ENCODE measurements at regions of chr9 and their contacts with region 1.

Region 1: GRCh38 chr9:135971892-135972291 is 10.7 kb upstream of the UBAC1 start:
- DNase-seq: peak in 1 of 2 experiments; percentile 38
- ATAC-seq: peak; percentile 26 to 30; a peak in 4 of 6 replicates
- H3K4me3 ChIP-seq: no peak overlapping the region
- H3K27ac ChIP-seq: no peak overlapping the region
- H3K4me1 ChIP-seq: peaks cover 9% of the 10 kb centered on the region; the same call in 1 of the 3 replicates
- CTCF ChIP-seq: no peak
- EP300 ChIP-seq: no peak
- POLR2A ChIP-seq: no peak
- RAD21 ChIP-seq: no peak

Region 2: GRCh38 chr9:135819905-135820304 is 152.0 kb before region 1 on chr9:
- CTCF ChIA-PET with region 1: no interaction called
- POLR2A ChIA-PET with region 1: no interaction called
- DNase-seq: no peak
- ATAC-seq: no peak
- H3K4me3 ChIP-seq: no peak overlapping the region
- H3K27ac ChIP-seq: no peak overlapping the region
- H3K4me1 ChIP-seq: no peaks in the 10 kb centered on the region
- CTCF ChIP-seq: no peak
- EP300 ChIP-seq: no peak
- POLR2A ChIP-seq: no peak
- RAD21 ChIP-seq: no peak

Region 3: DNA sequence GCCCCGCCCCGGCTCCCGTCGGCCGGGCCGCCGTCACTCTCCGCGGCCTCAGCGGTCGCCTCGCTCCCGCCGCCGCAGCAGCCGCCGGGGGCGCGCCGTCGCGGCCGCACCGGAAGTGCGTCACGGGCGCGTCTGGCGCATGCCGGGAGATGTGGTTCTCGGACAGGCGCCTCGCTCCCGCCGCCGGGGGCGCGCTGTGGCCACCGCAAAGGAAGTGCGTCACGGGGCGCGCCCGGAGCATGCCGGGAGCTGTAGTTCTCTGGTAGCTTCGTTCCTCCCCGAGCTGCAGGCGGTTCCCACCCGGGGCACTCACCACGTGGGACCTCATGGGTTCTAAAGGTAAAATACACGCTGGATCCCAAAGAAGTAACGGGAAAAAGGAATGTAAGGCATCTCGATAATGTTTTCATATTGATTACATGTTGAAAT is 10.6 kb before region 1 on chr9 and contains the start of gene UBAC1:
- CTCF ChIA-PET with region 1: interaction called, 27 read pairs
- POLR2A ChIA-PET with region 1: no interaction called
- DNase-seq: peak; percentile 95 to 99
- ATAC-seq: peak; percentile 92 to 93
- H3K4me3 ChIP-seq: peak within 1 kb of the TSS; percentile 87
- H3K27ac ChIP-seq: peak within 1 kb of the TSS; percentile 86 to 93
- H3K4me1 ChIP-seq: peaks cover 12% of the 10 kb centered on the region; the same call in 2 of the 3 replicates
- CTCF ChIP-seq: peak; percentile 29
- EP300 ChIP-seq: no peak
- POLR2A ChIP-seq: peak; percentile 30; the same call in 1 of the 2 replicates
- RAD21 ChIP-seq: no peak
- polyA plus RNA-seq, gene UBAC1: 31.5 and 37.6 TPM in 2 replicates

Region 4: DNA sequence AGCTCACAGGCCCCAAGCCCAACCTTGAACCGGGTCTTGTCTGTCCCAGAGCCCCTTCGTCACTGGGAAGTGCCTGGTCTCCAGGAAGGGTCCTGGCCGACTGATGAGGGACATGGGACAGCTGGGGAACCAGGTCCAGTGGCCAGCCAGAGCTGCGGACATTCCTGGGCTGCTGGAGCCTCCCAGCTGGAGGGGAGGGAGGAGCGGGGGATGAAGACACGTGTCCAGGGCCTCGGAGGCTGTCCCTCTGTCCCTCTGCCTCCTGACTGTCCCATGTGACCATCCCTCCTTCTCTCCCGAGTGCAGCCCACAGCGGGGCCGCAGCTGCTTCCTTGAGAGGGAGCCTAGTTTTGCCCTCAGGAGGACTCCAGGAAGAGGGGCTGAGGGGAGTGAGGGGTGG is 31.0 kb after region 1 on chr9:
- CTCF ChIA-PET with region 1: interaction called, 15 read pairs
- POLR2A ChIA-PET with region 1: no interaction called
- DNase-seq: no peak
- ATAC-seq: no peak
- H3K4me3 ChIP-seq: no peak overlapping the region
- H3K27ac ChIP-seq: peak overlapping the region in 1 of 2 experiments; percentile 63; a peak in 1 of 6 replicates
- H3K4me1 ChIP-seq: peaks cover 28% of the 10 kb centered on the region
- CTCF ChIP-seq: no peak
- EP300 ChIP-seq: no peak
- POLR2A ChIP-seq: no peak
- RAD21 ChIP-seq: no peak

Region 5: DNA sequence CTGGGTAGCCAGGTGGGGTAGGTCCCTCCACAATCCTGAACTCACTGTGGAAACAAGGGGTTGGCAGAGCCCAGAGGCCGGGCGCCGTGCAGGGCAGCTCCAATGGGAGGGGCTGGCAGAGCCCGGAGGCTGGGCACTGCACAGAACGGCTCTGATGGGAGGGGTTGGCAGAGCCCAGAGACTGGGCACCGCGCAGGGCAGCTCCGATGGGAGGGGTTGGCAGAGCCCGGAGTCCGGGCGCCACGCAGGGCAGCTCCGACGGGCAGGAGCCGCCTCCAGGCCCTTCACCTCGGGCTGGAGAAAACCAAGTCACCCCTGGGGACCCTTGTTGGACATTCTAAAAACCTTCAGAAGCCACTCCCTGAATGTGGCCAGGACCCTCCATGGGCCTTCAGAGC is 113.9 kb after region 1 on chr9:
- CTCF ChIA-PET with region 1: interaction called, 33 read pairs
- POLR2A ChIA-PET with region 1: no interaction called
- DNase-seq: no peak
- ATAC-seq: 0 out of 6 replicates have a peak, but pooled peaks of 1 of the 2 experiments have one; percentile 8
- H3K4me3 ChIP-seq: no peak overlapping the region
- H3K27ac ChIP-seq: peak overlapping the region in 1 of 2 experiments; percentile 16; a peak in 1 of 6 replicates
- H3K4me1 ChIP-seq: peaks cover 19% of the 10 kb centered on the region
- CTCF ChIP-seq: no peak
- EP300 ChIP-seq: no peak
- POLR2A ChIP-seq: no peak
- RAD21 ChIP-seq: no peak

Region 6: GRCh38 chr9:136109351-136110081 is 137.6 kb after region 1 on chr9:
- CTCF ChIA-PET with region 1: interaction called, 21 read pairs
- POLR2A ChIA-PET with region 1: interaction called, 5 read pairs
- DNase-seq: peak; percentile 83 to 90
- ATAC-seq: peak; percentile 78 to 84
- H3K4me3 ChIP-seq: peak overlapping the region; percentile 35
- H3K27ac ChIP-seq: peak overlapping the region; percentile 92 to 97
- H3K4me1 ChIP-seq: peaks cover 36% of the 10 kb centered on the region
- CTCF ChIP-seq: 0 out of 3 replicates have a peak, but pooled peaks have one; percentile 15
- EP300 ChIP-seq: peak in 1 of 2 experiments; percentile 47; a peak in 1 of 5 replicates
- POLR2A ChIP-seq: peak; percentile 25
- RAD21 ChIP-seq: peak; percentile 16 to 43; a peak in 3 of 5 replicates

Measured in A549 (cell line).